CD8-positive, alpha-beta T cell (primary cell): ENCODE measurements at regions of chr3 and their contacts with region 1.

Region 1: DNA sequence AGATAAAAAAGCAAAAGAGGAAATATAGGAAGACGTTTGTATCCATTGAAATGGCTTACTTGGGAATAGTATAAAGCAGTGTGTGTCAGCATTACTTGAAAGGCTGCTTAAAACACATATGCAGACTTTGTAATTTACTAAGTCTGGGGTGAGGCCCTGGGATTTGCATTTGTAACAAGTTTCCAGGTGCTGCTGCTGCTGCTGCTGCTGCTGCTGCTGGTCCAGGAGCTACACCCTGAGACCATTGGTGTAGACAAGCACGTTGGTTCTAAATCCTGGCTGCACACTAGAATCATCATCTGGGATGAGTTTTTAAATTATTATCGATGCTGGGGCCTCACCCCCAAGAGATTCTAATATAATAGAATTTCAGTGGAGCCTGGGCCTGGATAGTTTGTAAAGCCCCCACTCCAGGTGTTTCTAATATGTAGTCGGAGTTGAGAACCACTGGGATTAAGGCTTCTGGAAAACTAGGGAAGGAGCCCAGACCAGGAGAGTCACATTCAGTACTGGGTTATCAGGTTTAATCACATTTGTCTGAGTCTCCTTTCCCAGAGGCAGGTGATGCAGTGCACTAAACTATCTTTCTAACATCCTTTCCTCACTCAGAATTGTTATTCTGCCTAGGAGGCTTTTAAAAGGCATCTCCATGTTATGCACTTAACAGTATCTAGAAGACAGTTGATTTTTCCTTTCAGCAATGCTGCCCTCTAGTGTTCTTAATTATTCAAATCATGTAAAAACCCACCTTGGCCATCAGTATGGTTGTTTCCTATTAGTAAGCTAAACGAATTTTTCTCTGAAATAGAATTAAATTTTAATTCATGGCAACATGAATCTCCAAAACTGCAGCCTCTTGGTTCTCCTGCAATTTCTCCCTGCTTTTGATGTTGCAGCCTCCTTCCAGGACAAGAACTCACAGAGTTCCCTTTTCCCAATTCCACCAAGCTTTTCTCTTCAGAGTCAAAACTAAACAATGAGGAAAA is 45.4 kb downstream of the SSR3 start:
- DNase-seq: peak in 2 of 9 experiments; percentile 61 to 72
- ATAC-seq: peak; percentile 86
- H3K4me3 ChIP-seq: no peak overlapping the region
- H3K4me3 Mint-ChIP-seq: no peak overlapping the region
- H3K27ac ChIP-seq: no peak overlapping the region
- H3K27ac Mint-ChIP-seq: no peak overlapping the region
- H3K4me1 ChIP-seq: no peaks in the 10 kb centered on the region
- H3K4me1 Mint-ChIP-seq: no peaks in the 10 kb centered on the region
- H3K27me3 ChIP-seq: no peaks in the 10 kb centered on the region
- H3K27me3 Mint-ChIP-seq: peaks cover 15% of the 10 kb centered on the region
- CTCF ChIP-seq: peak; percentile 69

Region 2: GRCh38 chr3:156151824-156152428 is 357.6 kb before region 1 on chr3:
- CTCF ChIA-PET with region 1: interaction called, 125 read pairs
- POLR2A ChIA-PET with region 1: no interaction called
- intact Hi-C with region 1: loop called (anchors 1 kb)
- DNase-seq: peak in 8 of 9 experiments; percentile 25 to 66 (median 54)
- ATAC-seq: peak; percentile 56
- H3K4me3 ChIP-seq: no peak overlapping the region
- H3K4me3 Mint-ChIP-seq: no peak overlapping the region
- H3K27ac ChIP-seq: no peak overlapping the region
- H3K27ac Mint-ChIP-seq: no peak overlapping the region
- H3K4me1 ChIP-seq: no peaks in the 10 kb centered on the region
- H3K4me1 Mint-ChIP-seq: peaks cover 3% of the 10 kb centered on the region
- H3K27me3 ChIP-seq: no peaks in the 10 kb centered on the region
- H3K27me3 Mint-ChIP-seq: peaks cover 5% of the 10 kb centered on the region
- CTCF ChIP-seq: peak; percentile 73

Region 3: DNA sequence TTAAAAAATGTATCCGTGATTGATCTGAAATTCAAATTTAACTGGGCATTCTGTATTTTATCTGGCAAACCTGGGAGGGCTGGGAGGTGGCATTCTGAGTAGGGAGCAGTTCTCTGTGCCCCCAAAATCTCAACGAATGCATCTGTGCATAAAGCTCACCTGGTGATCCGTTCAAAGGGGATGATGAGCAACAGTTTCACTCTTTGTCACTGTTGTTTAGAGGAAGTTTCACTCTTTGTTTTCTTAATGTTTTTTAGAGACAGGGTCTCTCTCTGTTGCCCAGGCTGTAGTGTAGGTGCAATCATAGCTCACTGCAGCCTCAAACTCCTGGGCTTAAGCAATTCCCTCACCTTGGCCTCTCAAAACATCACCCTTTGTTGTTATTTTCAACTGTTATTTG is 141.3 kb before region 1 on chr3:
- CTCF ChIA-PET with region 1: no interaction called
- POLR2A ChIA-PET with region 1: no interaction called
- intact Hi-C with region 1: no loop called
- DNase-seq: no peak
- ATAC-seq: no peak
- H3K4me3 ChIP-seq: no peak overlapping the region
- H3K4me3 Mint-ChIP-seq: no peak overlapping the region
- H3K27ac ChIP-seq: no peak overlapping the region
- H3K27ac Mint-ChIP-seq: no peak overlapping the region
- H3K4me1 ChIP-seq: no peaks in the 10 kb centered on the region
- H3K4me1 Mint-ChIP-seq: no peaks in the 10 kb centered on the region
- H3K27me3 ChIP-seq: peaks cover 0 to 3% of the 10 kb centered on the region in 2 experiments
- H3K27me3 Mint-ChIP-seq: peaks cover 16% of the 10 kb centered on the region
- CTCF ChIP-seq: no peak

Region 4: DNA sequence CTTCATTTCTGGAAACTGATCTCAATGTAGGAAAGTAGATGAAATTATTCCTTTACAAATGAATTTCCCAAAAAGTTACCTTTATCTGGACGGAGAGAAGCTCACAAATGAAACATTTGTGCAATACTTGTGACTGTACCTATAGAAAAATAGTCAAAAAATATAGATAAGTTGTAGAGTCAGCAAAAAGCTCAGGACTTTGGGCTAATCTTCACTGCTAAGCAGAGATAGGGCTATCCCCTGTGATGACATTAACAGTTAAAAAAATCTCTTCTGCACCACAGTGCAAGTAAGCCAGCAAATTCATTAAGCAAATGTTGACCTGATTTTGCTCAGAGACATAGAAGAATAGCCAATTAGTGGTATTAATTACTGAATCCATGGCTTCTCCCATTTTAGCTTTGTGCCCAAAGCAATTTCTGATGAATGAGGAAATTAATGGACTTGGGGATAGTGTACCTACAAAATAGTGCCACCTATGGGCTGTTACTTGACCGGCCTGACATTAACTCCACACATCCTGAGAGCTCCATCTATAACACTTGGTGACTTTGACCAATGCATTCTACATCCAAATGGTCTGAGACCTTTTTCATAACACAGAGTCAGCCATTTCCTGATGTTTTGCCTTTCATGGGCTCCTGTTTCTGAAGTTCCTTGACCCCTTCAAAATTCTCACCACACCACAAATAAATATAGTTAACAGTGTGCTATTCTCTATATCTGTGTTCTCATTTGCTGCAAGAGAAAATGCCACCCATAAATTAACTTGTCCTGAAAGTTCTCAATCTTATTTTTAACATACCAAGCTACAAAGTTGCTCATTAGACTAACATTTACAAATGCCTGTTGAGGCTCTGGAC is 59.5 kb before region 1 on chr3:
- CTCF ChIA-PET with region 1: interaction called, 24 read pairs
- POLR2A ChIA-PET with region 1: interaction called, 3 read pairs
- intact Hi-C with region 1: loop called (anchors 1 kb)
- DNase-seq: peak in 2 of 9 experiments; percentile 16 to 29
- ATAC-seq: no peak
- H3K4me3 ChIP-seq: no peak overlapping the region
- H3K4me3 Mint-ChIP-seq: no peak overlapping the region
- H3K27ac ChIP-seq: no peak overlapping the region
- H3K27ac Mint-ChIP-seq: no peak overlapping the region
- H3K4me1 ChIP-seq: no peaks in the 10 kb centered on the region
- H3K4me1 Mint-ChIP-seq: no peaks in the 10 kb centered on the region
- H3K27me3 ChIP-seq: no peaks in the 10 kb centered on the region
- H3K27me3 Mint-ChIP-seq: no peaks in the 10 kb centered on the region
- CTCF ChIP-seq: peak; percentile 14

Region 5: DNA sequence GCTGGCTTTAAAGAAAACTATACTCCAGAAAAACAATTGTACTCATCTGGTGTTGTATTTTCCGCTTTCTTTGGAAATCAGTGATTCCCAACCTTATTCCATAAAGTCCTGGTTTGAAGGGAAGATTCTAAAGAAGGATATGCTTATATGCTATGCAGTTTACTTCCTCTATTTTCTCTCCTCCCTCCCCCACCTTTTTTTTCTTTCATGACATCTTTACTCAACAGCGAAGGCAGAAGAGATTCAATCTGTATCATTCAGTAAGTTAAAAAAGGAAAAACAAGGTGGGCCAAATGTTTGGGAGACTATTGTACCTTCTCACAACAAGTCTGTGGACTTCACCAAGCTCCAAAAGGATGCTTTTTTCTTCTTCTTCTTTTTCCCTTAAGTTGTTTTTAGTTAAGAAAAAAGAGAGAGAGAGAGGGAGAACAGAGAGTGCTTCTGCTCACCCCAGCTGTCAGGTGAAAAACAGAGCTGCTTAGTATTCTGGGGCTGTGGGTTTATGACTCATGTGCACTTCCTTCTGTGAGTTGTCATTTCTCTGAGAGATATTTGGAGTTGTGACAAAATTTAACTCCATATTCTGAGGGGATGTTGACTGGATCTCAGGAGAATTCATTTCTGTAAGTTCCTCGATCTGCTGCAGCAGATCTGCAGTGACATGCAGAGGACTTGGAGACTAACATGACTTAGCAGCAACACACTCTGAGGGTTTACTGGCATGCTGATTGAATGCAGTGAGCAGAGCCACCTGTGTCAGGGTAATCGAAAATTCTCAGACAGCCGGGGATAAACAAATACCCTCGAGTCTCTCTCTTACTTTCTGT is 25.3 kb before region 1 on chr3:
- CTCF ChIA-PET with region 1: interaction called, 62 read pairs
- POLR2A ChIA-PET with region 1: interaction called, 6 read pairs
- intact Hi-C with region 1: loop called (anchors 1 to 2 kb)
- DNase-seq: peak in 8 of 9 experiments; percentile 16 to 81 (median 58)
- ATAC-seq: peak; percentile 85
- H3K4me3 ChIP-seq: peak overlapping the region; percentile 21 to 36
- H3K4me3 Mint-ChIP-seq: peak overlapping the region; percentile 74
- H3K27ac ChIP-seq: peak overlapping the region; percentile 28 to 82
- H3K27ac Mint-ChIP-seq: peak overlapping the region; percentile 93
- H3K4me1 ChIP-seq: peaks cover 24% of the 10 kb centered on the region
- H3K4me1 Mint-ChIP-seq: peaks cover 42% of the 10 kb centered on the region
- H3K27me3 ChIP-seq: no peaks in the 10 kb centered on the region
- H3K27me3 Mint-ChIP-seq: no peaks in the 10 kb centered on the region
- CTCF ChIP-seq: no peak

Region 6: GRCh38 chr3:156525808-156526207 is 16.3 kb after region 1 on chr3:
- CTCF ChIA-PET with region 1: interaction called, 21 read pairs
- POLR2A ChIA-PET with region 1: no interaction called
- intact Hi-C with region 1: no loop called
- DNase-seq: no peak
- ATAC-seq: no peak
- H3K4me3 ChIP-seq: no peak overlapping the region
- H3K4me3 Mint-ChIP-seq: no peak overlapping the region
- H3K27ac ChIP-seq: no peak overlapping the region
- H3K27ac Mint-ChIP-seq: no peak overlapping the region
- H3K4me1 ChIP-seq: peaks cover 6% of the 10 kb centered on the region
- H3K4me1 Mint-ChIP-seq: peaks cover 8% of the 10 kb centered on the region
- H3K27me3 ChIP-seq: no peaks in the 10 kb centered on the region
- H3K27me3 Mint-ChIP-seq: peaks cover 15% of the 10 kb centered on the region
- CTCF ChIP-seq: no peak